GM12878 (cell line): ENCODE measurements at regions of chr6 and their contacts with region 1.

Region 1: DNA sequence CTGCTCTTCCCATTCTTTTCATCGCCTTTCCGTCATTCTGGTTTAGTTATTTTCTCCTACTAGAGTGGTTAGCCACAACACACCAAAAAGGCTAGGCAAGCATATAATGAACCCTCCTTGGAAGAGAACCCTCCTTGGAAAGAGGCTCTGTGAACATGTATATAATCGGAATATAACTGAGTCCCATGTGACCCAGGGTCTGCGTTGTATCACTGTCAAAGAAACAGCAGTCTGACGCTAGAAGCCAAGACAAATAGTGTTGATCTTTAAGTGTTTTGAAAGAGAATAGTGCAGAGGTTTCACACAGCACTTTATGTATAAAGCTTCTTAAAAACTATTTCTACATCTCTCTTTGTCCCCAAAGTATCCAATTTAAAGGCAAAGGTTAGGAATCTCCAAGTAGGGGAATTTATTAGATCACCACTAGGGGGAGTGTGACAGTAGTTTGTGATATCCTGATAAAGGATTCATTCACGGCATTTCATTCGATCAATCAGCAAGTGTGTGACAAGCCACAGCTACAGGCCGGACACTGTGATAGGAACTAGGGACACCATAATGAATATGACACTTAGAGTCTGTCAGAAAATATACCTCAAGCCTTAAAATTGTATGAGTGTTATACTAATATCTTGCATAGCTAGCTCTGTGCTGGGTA is 395.3 kb downstream of the CD109 start:
- DNase-seq: no peak
- ATAC-seq: peak; percentile 73
- H3K4me3 ChIP-seq: no peak overlapping the region
- H3K27ac ChIP-seq: no peak overlapping the region
- H3K4me1 ChIP-seq: no peaks in the 10 kb centered on the region
- H3K27me3 ChIP-seq: no peaks in the 10 kb centered on the region
- CTCF ChIP-seq: peak; percentile 47 to 70 (median 56); a peak in 5 of 6 replicates
- EP300 ChIP-seq: no peak
- POLR2A ChIP-seq: no peak
- RAD21 ChIP-seq: peak; percentile 42

Region 2: GRCh38 chr6:73747289-73747688 is 344.0 kb before region 1 on chr6:
- CTCF ChIA-PET with region 1: interaction called, 4 read pairs
- POLR2A ChIA-PET with region 1: no interaction called
- RAD21 ChIA-PET with region 1: no interaction called
- SMC1A ChIA-PET with region 1: no interaction called
- in situ Hi-C with region 1: loop called (anchors 5 kb)
- intact Hi-C with region 1: no loop called
- DNase-seq: peak; percentile 51
- ATAC-seq: peak; percentile 96
- H3K4me3 ChIP-seq: no peak overlapping the region; the same call in 1 of the 2 replicates
- H3K27ac ChIP-seq: no peak overlapping the region
- H3K4me1 ChIP-seq: peaks cover 2% of the 10 kb centered on the region; the same call in 1 of the 2 replicates
- H3K27me3 ChIP-seq: no peaks in the 10 kb centered on the region
- CTCF ChIP-seq: no peak
- EP300 ChIP-seq: no peak
- POLR2A ChIP-seq: no peak
- RAD21 ChIP-seq: no peak

Region 3: GRCh38 chr6:74075323-74075722 is 15.9 kb before region 1 on chr6:
- CTCF ChIA-PET with region 1: interaction called, 10 read pairs
- POLR2A ChIA-PET with region 1: no interaction called
- RAD21 ChIA-PET with region 1: no interaction called
- SMC1A ChIA-PET with region 1: interaction called, 4 read pairs
- in situ Hi-C with region 1: no loop called
- intact Hi-C with region 1: no loop called
- DNase-seq: no peak
- ATAC-seq: no peak
- H3K4me3 ChIP-seq: no peak overlapping the region
- H3K27ac ChIP-seq: no peak overlapping the region
- H3K4me1 ChIP-seq: no peaks in the 10 kb centered on the region
- H3K27me3 ChIP-seq: no peaks in the 10 kb centered on the region; a peak in 1 of 4 replicates
- CTCF ChIP-seq: no peak
- EP300 ChIP-seq: no peak
- POLR2A ChIP-seq: no peak
- RAD21 ChIP-seq: no peak

Region 4: GRCh38 chr6:74103417-74103816 is 12.2 kb after region 1 on chr6:
- CTCF ChIA-PET with region 1: interaction called, 18 read pairs
- POLR2A ChIA-PET with region 1: no interaction called
- RAD21 ChIA-PET with region 1: no interaction called
- SMC1A ChIA-PET with region 1: interaction called, 8 read pairs
- in situ Hi-C with region 1: no loop called
- intact Hi-C with region 1: no loop called
- DNase-seq: no peak
- ATAC-seq: no peak
- H3K4me3 ChIP-seq: no peak overlapping the region
- H3K27ac ChIP-seq: no peak overlapping the region
- H3K4me1 ChIP-seq: no peaks in the 10 kb centered on the region
- H3K27me3 ChIP-seq: no peaks in the 10 kb centered on the region
- CTCF ChIP-seq: no peak
- EP300 ChIP-seq: no peak
- POLR2A ChIP-seq: no peak
- RAD21 ChIP-seq: no peak